Breast epithelium (tissue), 4 donors: ENCODE measurements at regions of chr10 and their contacts with region 1.

Region 1: DNA sequence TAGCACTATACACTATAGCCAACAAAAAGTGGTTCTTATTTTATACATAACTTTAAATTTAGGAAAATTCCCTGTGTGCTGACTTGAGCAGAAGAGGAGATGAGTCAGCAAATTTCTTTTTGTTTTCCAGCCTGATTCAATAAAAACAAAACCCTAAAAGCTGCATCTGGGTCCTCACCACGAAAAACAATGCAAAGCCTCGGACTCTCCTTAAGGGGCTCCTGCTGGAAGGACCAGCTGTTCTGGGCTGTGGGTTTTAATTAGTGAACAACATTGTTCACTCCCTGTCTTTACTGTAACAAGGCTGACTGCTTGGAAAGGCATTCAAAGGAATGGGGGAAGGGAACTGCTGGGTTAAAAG is 240.1 kb downstream of the ADAM12 start:
- DNase-seq: no peak
- H3K4me3 ChIP-seq: no peak overlapping the region
- H3K27ac ChIP-seq: peak overlapping the region in 1 of 2 donors; percentile 84
- H3K4me1 ChIP-seq: no peaks in the 10 kb centered on the region
- H3K27me3 ChIP-seq: no peaks in the 10 kb centered on the region
- CTCF ChIP-seq: no peak
- POLR2A ChIP-seq: no peak

Region 2: GRCh38 chr10:126215732-126216631 is 67.8 kb after region 1 on chr10:
- intact Hi-C with region 1: loop called (anchors 10 kb)
- DNase-seq: no peak
- H3K4me3 ChIP-seq: peak overlapping the region in 1 of 3 donors; percentile 8
- H3K27ac ChIP-seq: peak overlapping the region; percentile 34 to 81
- H3K4me1 ChIP-seq: no peaks in the 10 kb centered on the region
- H3K27me3 ChIP-seq: no peaks in the 10 kb centered on the region
- CTCF ChIP-seq: no peak
- POLR2A ChIP-seq: no peak

Region 3: DNA sequence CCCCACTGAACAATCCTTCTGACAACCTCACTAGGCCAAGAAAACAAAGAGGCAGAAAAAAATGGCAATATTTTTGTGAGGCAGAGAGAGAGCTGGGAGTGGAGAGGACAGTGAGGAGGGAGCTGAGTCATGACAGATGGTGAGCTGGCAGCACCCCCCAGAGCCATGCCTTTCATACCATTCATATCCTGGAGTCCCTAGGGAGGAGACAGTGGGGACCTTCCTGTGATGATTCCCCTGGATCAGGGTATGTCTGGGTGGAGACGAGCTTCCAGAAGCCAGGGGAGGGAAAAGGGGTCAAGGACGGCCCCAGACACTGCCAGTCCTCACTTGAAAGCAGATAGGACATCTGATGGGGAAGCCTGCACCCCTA is 79.5 kb after region 1 on chr10:
- intact Hi-C with region 1: no loop called
- DNase-seq: no peak
- H3K4me3 ChIP-seq: no peak overlapping the region
- H3K27ac ChIP-seq: peak overlapping the region in 1 of 2 donors; percentile 20
- H3K4me1 ChIP-seq: no peaks in the 10 kb centered on the region
- H3K27me3 ChIP-seq: no peaks in the 10 kb centered on the region
- CTCF ChIP-seq: no peak
- POLR2A ChIP-seq: no peak